Thyroid gland (tissue), 4 donors: ENCODE measurements at regions of chr1 and their contacts with region 1.

Region 1: GRCh38 chr1:155105604-155106022 is 22.1 kb upstream of the EFNA1 start:
- DNase-seq: no peak
- H3K4me3 ChIP-seq: no peak overlapping the region
- H3K27ac ChIP-seq: no peak overlapping the region
- H3K4me1 ChIP-seq: peaks cover 0 to 5% of the 10 kb centered on the region in 2 donors
- H3K27me3 ChIP-seq: no peaks in the 10 kb centered on the region
- CTCF ChIP-seq: no peak
- POLR2A ChIP-seq: no peak

Region 2: DNA sequence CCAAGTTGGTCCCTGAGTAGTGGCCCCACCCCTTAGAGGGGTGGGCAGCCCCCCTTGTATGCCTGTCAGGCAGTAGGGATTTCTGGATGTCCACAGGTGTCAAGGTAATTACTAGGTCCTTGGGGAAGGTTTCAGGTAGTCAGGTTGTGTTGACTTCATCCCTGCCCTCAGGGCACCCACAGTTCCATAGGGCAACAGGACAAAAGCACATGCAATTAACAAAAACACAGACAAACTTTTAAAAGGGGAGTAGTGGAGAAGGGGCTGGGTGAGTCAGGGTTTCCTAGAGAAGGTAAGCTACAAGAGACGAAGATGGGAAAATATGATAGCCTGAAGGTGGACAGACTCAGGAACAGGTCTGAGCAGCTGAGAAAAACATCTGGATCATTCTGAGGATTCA is 53.4 kb after region 1 on chr1:
- intact Hi-C with region 1: loop called (anchors 5 kb)
- DNase-seq: no peak
- H3K4me3 ChIP-seq: no peak overlapping the region
- H3K27ac ChIP-seq: no peak overlapping the region
- H3K4me1 ChIP-seq: no peaks in the 10 kb centered on the region
- H3K27me3 ChIP-seq: no peaks in the 10 kb centered on the region
- CTCF ChIP-seq: no peak
- POLR2A ChIP-seq: no peak